ENCODE measurements at regions of chr18 and their contacts with region 1.

Region 1: DNA sequence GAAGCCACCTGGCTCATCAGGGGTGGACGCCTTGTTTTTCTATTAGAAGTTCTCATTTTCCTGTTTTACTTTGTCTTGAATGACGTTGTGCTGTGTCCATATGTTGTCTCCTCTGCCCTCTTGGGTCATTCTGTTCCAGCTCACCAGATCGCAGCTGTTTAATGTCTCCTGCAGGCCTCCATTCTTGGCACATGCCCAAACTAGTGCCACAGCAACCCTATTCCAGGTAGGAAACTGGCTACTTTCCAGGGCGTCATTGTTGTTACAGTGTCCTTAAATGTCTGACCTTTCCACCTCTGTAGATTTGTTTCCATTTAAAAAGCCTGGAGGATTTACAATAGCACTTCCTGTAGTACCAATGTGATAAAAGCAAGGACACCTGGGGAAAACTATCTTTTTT is 500.7 kb downstream of the METTL4 start:
- DNase-seq: no peak
- ATAC-seq: no peak

Region 2: GRCh38 chr18:1954583-1955312 is 115.9 kb before region 1 on chr18:
- intact Hi-C with region 1: no loop called
- DNase-seq: no peak
- ATAC-seq: no peak

Region 3: GRCh38 chr18:2009942-2010697 is 60.5 kb before region 1 on chr18:
- intact Hi-C with region 1: loop called (anchors 10 kb)
- DNase-seq: no peak
- ATAC-seq: peak; percentile 86

Region 4: DNA sequence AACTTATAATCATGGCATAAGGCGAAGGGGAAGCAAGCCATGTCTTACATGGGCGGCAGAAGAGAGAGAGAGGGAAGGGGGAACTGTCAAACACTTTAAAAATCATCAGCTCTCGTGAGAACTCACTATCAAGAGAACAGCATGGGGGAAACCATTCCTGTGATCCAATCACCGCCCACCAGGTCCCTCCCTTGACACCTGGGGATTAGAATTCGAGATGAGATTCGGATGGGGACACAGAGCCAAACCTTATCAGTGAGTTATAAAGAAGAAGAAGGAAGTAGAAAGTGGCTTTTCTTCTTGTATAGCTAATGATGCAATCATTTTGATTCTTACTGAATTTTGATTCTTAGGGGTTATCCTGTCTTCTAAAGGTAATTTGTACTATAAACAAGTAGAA is 636.3 kb after region 1 on chr18:
- intact Hi-C with region 1: no loop called
- DNase-seq: no peak
- ATAC-seq: no peak

Measured in left ventricle myocardium superior (tissue), 1 donor.